T-cell (primary cell): ENCODE measurements at regions of chr7 and their contacts with region 1.

Region 1: GRCh38 chr7:28029051-28029450 is 151.5 kb downstream of the JAZF1 start:
- DNase-seq: no peak
- ATAC-seq: no peak
- H3K4me3 ChIP-seq: no peak overlapping the region
- H3K4me3 Mint-ChIP-seq: no peak overlapping the region
- H3K27ac ChIP-seq: no peak overlapping the region
- H3K27ac Mint-ChIP-seq: no peak overlapping the region
- H3K4me1 ChIP-seq: peaks cover 2 to 5% of the 10 kb centered on the region in 2 experiments
- H3K4me1 Mint-ChIP-seq: peaks cover 8 to 36% (median 8%) of the 10 kb centered on the region in 3 donors
- H3K27me3 ChIP-seq: peaks cover 0 to 3% of the 10 kb centered on the region in 2 experiments
- H3K27me3 Mint-ChIP-seq: peaks cover 0 to 3% of the 10 kb centered on the region in 2 donors

Region 2: DNA sequence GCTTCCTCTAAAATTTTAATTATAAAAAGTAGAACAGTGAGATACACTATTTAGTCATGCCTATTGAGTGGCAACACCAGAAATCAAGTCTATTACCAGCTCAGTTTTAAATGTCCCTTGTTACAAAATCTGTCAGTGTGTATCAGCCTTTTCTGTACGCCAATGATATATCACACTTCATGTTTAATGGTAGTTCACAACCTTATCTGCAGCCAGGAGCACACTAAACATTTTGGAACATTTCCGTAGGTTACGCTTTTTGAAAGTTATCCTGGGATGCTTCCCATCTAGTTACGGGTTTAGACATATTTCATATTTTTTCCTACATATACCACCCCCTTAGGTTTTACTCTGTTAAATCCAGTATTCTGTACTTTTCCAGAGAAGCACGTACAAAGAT is 1833.9 kb before region 1 on chr7:
- CTCF ChIA-PET with region 1: no interaction called
- POLR2A ChIA-PET with region 1: interaction called in 1 of 2 experiments, 15 read pairs
- DNase-seq: peak in 1 of 35 experiments; percentile 35
- ATAC-seq: no peak
- H3K4me3 ChIP-seq: no peak overlapping the region
- H3K4me3 Mint-ChIP-seq: peak overlapping the region; percentile 71 to 96 (median 72)
- H3K27ac ChIP-seq: peak overlapping the region; percentile 47
- H3K27ac Mint-ChIP-seq: peak overlapping the region; percentile 50 to 68
- H3K4me1 ChIP-seq: peaks cover 37 to 65% of the 10 kb centered on the region in 2 experiments
- H3K4me1 Mint-ChIP-seq: peaks cover 69 to 90% (median 74%) of the 10 kb centered on the region in 3 donors
- H3K27me3 ChIP-seq: no peaks in the 10 kb centered on the region
- H3K27me3 Mint-ChIP-seq: peaks cover 0 to 2% of the 10 kb centered on the region in 2 donors

Region 3: GRCh38 chr7:27963056-27963455 is 66.0 kb before region 1 on chr7:
- CTCF ChIA-PET with region 1: no interaction called
- POLR2A ChIA-PET with region 1: interaction called in 1 of 2 experiments, 12 read pairs
- DNase-seq: no peak
- ATAC-seq: no peak
- H3K4me3 ChIP-seq: no peak overlapping the region
- H3K4me3 Mint-ChIP-seq: no peak overlapping the region
- H3K27ac ChIP-seq: no peak overlapping the region
- H3K27ac Mint-ChIP-seq: no peak overlapping the region
- H3K4me1 ChIP-seq: no peaks in the 10 kb centered on the region
- H3K4me1 Mint-ChIP-seq: peaks cover 0 to 20% (median 9%) of the 10 kb centered on the region in 3 donors
- H3K27me3 ChIP-seq: no peaks in the 10 kb centered on the region
- H3K27me3 Mint-ChIP-seq: no peaks in the 10 kb centered on the region

Region 4: GRCh38 chr7:27994639-27995038 is 34.4 kb before region 1 on chr7:
- CTCF ChIA-PET with region 1: no interaction called
- POLR2A ChIA-PET with region 1: no interaction called
- DNase-seq: no peak
- ATAC-seq: no peak
- H3K4me3 ChIP-seq: no peak overlapping the region
- H3K4me3 Mint-ChIP-seq: no peak overlapping the region
- H3K27ac ChIP-seq: no peak overlapping the region
- H3K27ac Mint-ChIP-seq: no peak overlapping the region
- H3K4me1 ChIP-seq: no peaks in the 10 kb centered on the region
- H3K4me1 Mint-ChIP-seq: peaks cover 0 to 40% (median 11%) of the 10 kb centered on the region in 3 donors
- H3K27me3 ChIP-seq: no peaks in the 10 kb centered on the region
- H3K27me3 Mint-ChIP-seq: no peaks in the 10 kb centered on the region

Region 5: DNA sequence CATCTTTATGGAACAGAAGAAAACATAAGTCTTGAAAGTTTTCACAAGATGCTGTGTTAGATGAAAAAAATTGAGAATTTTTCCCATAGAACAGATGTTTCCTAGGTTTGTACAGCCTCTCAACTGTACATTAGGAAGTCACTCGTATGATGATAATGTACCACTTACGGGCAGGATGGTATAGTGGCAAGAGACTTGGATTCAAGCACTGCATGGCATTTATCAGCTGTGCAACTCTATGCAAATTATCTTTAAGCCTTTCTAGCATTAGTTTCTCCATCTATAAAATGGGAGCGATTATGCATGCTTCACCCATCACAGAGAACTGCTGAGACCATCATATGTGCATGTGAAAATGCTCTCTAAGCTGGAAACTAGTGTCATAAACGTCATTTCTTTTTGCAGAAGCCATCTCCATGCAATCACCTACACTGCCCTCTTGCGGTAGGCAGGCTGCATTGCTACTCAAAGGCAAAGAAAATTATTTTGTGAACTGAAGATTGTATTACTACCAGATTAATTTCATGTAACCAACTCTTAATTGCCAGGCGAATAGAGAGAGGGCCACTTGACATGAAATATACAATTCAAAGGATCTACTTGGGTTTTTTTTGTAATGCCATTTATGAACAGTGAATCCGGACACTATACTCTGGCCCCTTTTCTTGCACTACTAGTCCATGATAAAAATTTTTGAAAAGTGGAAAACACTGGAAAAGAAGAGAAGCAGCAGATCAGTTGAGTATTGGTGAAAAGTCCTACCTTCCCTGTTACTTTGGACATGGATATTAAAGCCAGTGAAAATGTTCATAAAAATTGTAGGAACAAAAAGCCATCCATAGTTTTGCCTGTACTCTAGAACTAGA is 49.2 kb after region 1 on chr7:
- CTCF ChIA-PET with region 1: no interaction called
- POLR2A ChIA-PET with region 1: no interaction called
- DNase-seq: peak in 30 of 35 experiments; percentile 8 to 70 (median 34)
- ATAC-seq: peak in 2 of 4 experiments; percentile 43 to 76
- H3K4me3 ChIP-seq: no peak overlapping the region
- H3K4me3 Mint-ChIP-seq: no peak overlapping the region
- H3K27ac ChIP-seq: no peak overlapping the region
- H3K27ac Mint-ChIP-seq: no peak overlapping the region
- H3K4me1 ChIP-seq: peaks cover 0 to under 1% of the 10 kb centered on the region in 2 experiments
- H3K4me1 Mint-ChIP-seq: peaks cover 5 to 18% (median 8%) of the 10 kb centered on the region in 3 donors
- H3K27me3 ChIP-seq: no peaks in the 10 kb centered on the region
- H3K27me3 Mint-ChIP-seq: no peaks in the 10 kb centered on the region